ENCODE measurements at regions of chr18 and their contacts with region 1.

Region 1: GRCh38 chr18:54392543-54393023 is 34.9 kb downstream of the C18orf54 start:
- DNase-seq: no peak
- H3K4me3 Mint-ChIP-seq: no peak overlapping the region
- H3K27ac Mint-ChIP-seq: no peak overlapping the region
- H3K4me1 Mint-ChIP-seq: peaks cover 40% of the 10 kb centered on the region
- H3K27me3 Mint-ChIP-seq: no peaks in the 10 kb centered on the region

Region 2: GRCh38 chr18:54357660-54358494 is 34.7 kb before region 1 on chr18 and contains the starts of genes C18orf54 and STARD6:
- intact Hi-C with region 1: loop called (anchors 1 kb)
- DNase-seq: peak; percentile 90
- H3K4me3 Mint-ChIP-seq: peak within 1 kb of the TSS; percentile 99
- H3K27ac Mint-ChIP-seq: peak within 1 kb of the TSS; percentile 97
- H3K4me1 Mint-ChIP-seq: peaks cover 21% of the 10 kb centered on the region
- H3K27me3 Mint-ChIP-seq: no peaks in the 10 kb centered on the region
- total RNA-seq, gene C18orf54: 10.4 and 10.9 TPM in 2 replicates
- total RNA-seq, gene STARD6: not detected in 2 replicates

Region 3: DNA sequence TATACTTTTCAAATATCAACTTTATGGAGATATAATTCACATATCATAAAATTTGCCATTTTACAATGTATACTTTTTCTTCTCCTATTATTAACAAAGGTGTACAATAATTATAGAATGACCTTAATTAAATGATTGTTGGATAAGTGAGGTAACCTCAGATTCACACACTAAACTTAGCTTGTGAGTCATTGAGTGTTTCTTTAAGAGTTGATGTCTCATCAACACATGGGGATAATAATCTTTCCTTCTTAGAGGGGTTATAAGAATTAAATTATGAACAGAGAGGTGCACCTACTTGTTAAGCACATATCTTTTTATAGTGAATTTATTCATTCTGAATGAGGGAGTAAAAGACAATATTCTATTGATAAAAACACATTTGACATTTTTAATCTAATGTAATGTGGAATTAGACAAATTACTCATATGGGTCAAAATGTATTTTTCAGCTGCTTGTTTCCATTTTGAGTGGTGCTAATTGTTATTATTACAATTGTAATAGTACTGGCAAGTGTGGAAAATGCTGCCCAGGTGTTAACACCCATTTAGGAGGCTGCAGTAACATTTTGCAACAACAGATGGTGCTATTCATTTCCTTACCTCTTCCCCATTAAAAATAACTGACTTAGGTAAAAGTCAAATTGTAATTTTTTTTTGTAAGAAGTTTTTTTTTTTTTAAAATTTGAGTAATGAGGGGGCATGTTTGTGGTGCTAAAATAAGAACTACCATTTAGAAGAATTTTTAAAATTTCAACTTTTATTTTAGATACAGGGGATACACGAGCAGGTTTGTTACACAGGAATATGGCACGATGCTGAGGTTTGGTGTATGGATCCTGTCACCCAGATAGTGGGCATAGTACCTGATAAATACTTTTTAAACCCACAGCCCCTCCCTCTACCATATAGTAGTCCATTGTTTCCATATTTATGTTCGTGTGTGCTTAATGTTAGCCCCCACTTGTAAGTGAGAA is 166.3 kb after region 1 on chr18:
- intact Hi-C with region 1: loop called (anchors 5 kb)
- DNase-seq: no peak
- H3K4me3 Mint-ChIP-seq: no peak overlapping the region
- H3K27ac Mint-ChIP-seq: no peak overlapping the region
- H3K4me1 Mint-ChIP-seq: no peaks in the 10 kb centered on the region
- H3K27me3 Mint-ChIP-seq: no peaks in the 10 kb centered on the region

Region 4: GRCh38 chr18:54671291-54671881 is 278.8 kb after region 1 on chr18:
- intact Hi-C with region 1: loop called (anchors 2 kb)
- DNase-seq: no peak
- H3K4me3 Mint-ChIP-seq: no peak overlapping the region
- H3K27ac Mint-ChIP-seq: no peak overlapping the region
- H3K4me1 Mint-ChIP-seq: no peaks in the 10 kb centered on the region
- H3K27me3 Mint-ChIP-seq: peaks cover 10% of the 10 kb centered on the region

Measured in activated T-helper 2 cell treated with anti-CD3 and anti-CD28 coated beads, Interferon-gamma antibody, Interleukin-2, Interleukin-4, amounts not matched to agents 10 μg/mL and 5 μg/mL and 100 μg/mL, durations not matched to agents 14 hours and 24 hours and 36 hours (primary cell).